H1 (cell line): ENCODE measurements at regions of chr9 and their contacts with region 1.

Region 1: DNA sequence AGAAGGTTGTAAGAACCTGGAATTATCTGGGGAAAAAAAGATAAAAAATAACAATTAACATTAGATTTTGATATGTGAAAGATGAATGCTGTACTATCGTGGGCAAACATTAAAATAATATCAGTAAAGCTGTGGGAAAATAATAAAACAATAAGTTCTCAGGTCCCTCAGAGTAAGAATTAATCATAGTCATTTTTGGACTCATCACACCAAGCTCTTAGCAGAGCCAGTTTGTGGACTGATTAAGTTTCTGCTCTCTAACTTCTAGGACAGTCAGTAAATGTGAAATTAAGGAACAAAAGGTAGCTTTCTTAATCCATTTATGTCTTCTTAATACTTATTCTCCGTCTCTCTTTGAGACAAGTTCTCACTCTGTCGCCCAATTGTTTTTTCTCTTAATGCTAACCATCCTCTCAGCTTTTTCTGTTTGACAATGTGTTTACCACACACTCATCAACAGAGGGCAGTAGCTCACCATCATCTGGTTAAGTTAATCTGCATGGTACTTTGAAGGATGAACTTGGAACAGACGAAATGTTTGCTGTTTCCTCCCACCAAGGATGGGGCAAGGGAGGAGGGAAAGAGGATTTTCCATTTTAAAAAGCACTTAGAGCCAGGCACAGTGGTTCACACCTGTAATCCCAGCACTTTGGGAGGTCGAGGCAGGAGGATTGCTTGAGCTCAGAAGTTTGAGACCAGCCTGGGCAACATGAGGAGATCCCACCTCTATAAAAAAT is 5.3 kb upstream of the ACO1 start:
- DNase-seq: no peak
- H3K4me3 ChIP-seq: no peak overlapping the region
- H3K27ac ChIP-seq: no peak overlapping the region
- H3K4me1 ChIP-seq: peaks cover 0 to 8% (median 1%) of the 10 kb centered on the region in 4 experiments; a peak in 2 of 7 replicates
- H3K27me3 ChIP-seq: peaks cover 2 to 15% (median 8%) of the 10 kb centered on the region in 4 experiments
- CTCF ChIP-seq: peak in 2 of 3 experiments; percentile 78 to 87; a peak in 3 of 4 replicates
- EP300 ChIP-seq: no peak
- POLR2A ChIP-seq: no peak
- RAD21 ChIP-seq: peak; percentile 94

Region 2: GRCh38 chr9:32395490-32396216 is 16.5 kb after region 1 on chr9:
- CTCF ChIA-PET with region 1: interaction called, 76 read pairs
- POLR2A ChIA-PET with region 1: no interaction called
- DNase-seq: no peak
- H3K4me3 ChIP-seq: no peak overlapping the region
- H3K27ac ChIP-seq: no peak overlapping the region
- H3K4me1 ChIP-seq: peaks cover 0 to 7% (median 3%) of the 10 kb centered on the region in 4 experiments; a peak in 4 of 7 replicates
- H3K27me3 ChIP-seq: no peaks in the 10 kb centered on the region
- CTCF ChIP-seq: peak in 2 of 3 experiments; percentile 22 to 46; a peak in 2 of 4 replicates
- EP300 ChIP-seq: no peak
- POLR2A ChIP-seq: no peak
- RAD21 ChIP-seq: peak in 1 of 2 experiments; percentile 13; a peak in 1 of 4 replicates

Region 3: DNA sequence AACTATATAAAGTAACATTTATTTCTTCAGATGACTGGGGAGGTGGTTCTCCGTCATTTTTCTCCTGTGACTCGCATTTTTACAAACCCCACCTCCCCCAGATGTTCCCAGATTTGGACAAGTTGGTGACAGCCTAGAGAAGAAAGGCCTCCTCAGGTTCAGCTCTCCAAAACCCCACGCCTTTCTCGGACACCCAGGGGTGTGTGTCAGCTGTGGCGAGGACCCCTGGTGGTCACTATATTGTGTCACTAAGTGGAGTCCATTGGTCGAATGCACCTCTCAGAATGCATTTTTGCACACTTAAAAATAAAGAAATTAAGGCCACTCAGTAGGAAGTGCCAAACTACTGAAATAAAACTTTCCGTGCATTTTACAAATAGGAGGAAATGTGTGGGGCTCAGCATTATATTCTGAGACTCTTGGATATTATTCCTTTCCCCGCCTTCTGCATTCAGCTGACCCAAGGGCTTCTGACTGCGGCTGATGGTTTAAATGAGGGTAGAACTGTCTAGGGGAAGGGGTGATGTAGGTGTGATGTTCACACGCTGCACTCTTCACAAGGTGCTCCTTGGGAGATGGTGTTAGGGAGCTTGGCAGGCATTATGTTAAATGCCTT is 52.9 kb after region 1 on chr9:
- CTCF ChIA-PET with region 1: interaction called, 91 read pairs
- POLR2A ChIA-PET with region 1: no interaction called
- DNase-seq: peak in 1 of 2 experiments; percentile 52
- H3K4me3 ChIP-seq: no peak overlapping the region
- H3K27ac ChIP-seq: no peak overlapping the region
- H3K4me1 ChIP-seq: no peaks in the 10 kb centered on the region
- H3K27me3 ChIP-seq: peaks cover 0 to 1% (median 0%) of the 10 kb centered on the region in 4 experiments; a peak in 1 of 7 replicates
- CTCF ChIP-seq: peak; percentile 39 to 62 (median 52)
- EP300 ChIP-seq: no peak
- POLR2A ChIP-seq: no peak
- RAD21 ChIP-seq: peak; percentile 47 to 49

Region 4: DNA sequence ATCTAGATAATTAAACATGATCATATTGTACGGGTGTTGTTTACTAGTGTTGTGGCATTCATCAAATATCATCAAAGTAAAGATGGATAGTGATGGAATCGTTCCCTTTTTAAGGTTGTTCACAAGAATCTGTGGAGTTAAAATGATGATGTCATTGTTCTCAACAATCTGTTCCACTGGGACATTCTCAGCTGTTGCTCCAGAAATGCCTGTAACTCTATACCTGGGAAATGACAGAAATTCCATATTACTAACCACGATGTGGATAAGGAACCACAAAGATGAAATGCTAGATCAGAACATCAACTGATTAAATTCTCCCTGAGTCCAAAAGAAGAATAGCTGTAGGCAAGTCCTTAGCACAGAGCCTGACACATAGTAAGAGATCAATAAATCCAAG is 108.8 kb after region 1 on chr9:
- CTCF ChIA-PET with region 1: interaction called, 15 read pairs
- POLR2A ChIA-PET with region 1: no interaction called
- DNase-seq: no peak
- H3K4me3 ChIP-seq: no peak overlapping the region
- H3K27ac ChIP-seq: no peak overlapping the region
- H3K4me1 ChIP-seq: peaks cover 0 to 2% (median 0%) of the 10 kb centered on the region in 4 experiments; a peak in 1 of 7 replicates
- H3K27me3 ChIP-seq: no peaks in the 10 kb centered on the region
- CTCF ChIP-seq: no peak
- EP300 ChIP-seq: no peak
- POLR2A ChIP-seq: no peak
- RAD21 ChIP-seq: no peak

Region 5: DNA sequence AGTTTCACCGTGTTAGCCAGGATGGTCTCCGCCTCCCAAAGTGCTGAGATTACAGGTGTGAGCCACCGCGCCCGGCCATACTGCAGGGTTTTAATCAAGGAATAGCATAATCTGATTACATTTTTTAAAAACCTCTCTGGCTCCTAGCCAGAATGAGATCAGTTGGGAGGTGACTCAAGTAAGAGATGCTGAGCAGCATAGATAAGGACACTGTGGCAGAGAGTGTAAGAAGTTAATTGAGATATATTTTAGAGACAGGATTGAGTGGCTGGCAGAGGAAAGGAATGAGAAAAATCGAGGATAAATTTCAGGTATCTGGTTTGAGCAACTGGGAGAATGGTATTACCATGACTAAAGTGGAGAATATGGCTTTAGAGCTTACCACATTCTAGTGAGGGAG is 154.2 kb after region 1 on chr9:
- CTCF ChIA-PET with region 1: interaction called, 21 read pairs
- POLR2A ChIA-PET with region 1: no interaction called
- DNase-seq: no peak
- H3K4me3 ChIP-seq: no peak overlapping the region
- H3K27ac ChIP-seq: no peak overlapping the region
- H3K4me1 ChIP-seq: no peaks in the 10 kb centered on the region
- H3K27me3 ChIP-seq: no peaks in the 10 kb centered on the region
- CTCF ChIP-seq: no peak
- EP300 ChIP-seq: no peak
- POLR2A ChIP-seq: no peak
- RAD21 ChIP-seq: no peak

Region 6: DNA sequence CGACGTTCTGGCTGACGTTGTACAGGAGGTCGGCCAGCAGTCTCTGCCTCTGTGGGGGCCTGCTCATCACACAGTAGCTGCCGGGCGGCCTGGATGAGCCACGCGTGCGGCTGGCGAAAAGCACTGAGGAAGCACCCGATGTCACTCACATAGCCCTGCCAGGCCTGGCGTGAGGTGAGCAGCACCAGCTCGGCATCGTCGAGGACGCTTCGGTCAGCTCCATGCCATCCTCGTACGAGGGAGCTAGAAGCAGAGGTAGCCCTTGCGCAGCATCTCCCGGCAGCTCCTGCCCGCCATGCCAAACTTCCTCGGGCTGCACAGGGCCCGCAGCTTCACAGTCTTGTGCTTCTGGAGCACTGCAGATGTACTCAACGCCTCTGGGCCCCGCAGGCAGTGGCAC is 187.6 kb after region 1 on chr9:
- CTCF ChIA-PET with region 1: interaction called, 248 read pairs
- POLR2A ChIA-PET with region 1: interaction called, 4 read pairs
- DNase-seq: no peak
- H3K4me3 ChIP-seq: no peak overlapping the region
- H3K27ac ChIP-seq: no peak overlapping the region
- H3K4me1 ChIP-seq: peaks cover 0 to 2% (median 0%) of the 10 kb centered on the region in 4 experiments; a peak in 1 of 7 replicates
- H3K27me3 ChIP-seq: no peaks in the 10 kb centered on the region
- CTCF ChIP-seq: no peak
- EP300 ChIP-seq: no peak
- POLR2A ChIP-seq: no peak
- RAD21 ChIP-seq: no peak

Region 7: DNA sequence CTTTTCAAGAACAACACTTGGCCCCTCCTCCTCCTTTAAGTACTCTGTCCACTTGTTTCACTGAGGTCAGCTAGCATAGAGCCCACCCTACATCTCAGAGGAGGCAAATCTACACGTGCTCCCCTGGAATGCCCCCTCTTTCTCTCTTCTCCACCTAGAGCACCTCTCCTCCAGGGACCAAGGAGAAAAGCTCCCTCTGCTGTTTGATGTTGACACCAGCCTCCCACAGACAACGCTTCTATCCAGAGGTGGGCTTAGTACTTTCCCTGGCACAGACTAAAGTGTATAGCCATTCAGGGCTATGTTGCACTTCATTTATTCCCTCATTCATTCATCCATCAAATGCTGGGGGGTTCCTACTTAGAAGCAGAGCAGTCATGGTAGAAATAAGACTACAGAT is 324.5 kb after region 1 on chr9:
- CTCF ChIA-PET with region 1: interaction called, 14 read pairs
- POLR2A ChIA-PET with region 1: no interaction called
- DNase-seq: no peak
- H3K4me3 ChIP-seq: no peak overlapping the region
- H3K27ac ChIP-seq: no peak overlapping the region
- H3K4me1 ChIP-seq: no peaks in the 10 kb centered on the region
- H3K27me3 ChIP-seq: no peaks in the 10 kb centered on the region
- CTCF ChIP-seq: peak; percentile 46 to 70 (median 59)
- EP300 ChIP-seq: no peak
- POLR2A ChIP-seq: no peak
- RAD21 ChIP-seq: peak; percentile 56 to 61